Gastrocnemius medialis (tissue), 4 donors: ENCODE measurements at regions of chr2 and their contacts with region 1.

Region 1: DNA sequence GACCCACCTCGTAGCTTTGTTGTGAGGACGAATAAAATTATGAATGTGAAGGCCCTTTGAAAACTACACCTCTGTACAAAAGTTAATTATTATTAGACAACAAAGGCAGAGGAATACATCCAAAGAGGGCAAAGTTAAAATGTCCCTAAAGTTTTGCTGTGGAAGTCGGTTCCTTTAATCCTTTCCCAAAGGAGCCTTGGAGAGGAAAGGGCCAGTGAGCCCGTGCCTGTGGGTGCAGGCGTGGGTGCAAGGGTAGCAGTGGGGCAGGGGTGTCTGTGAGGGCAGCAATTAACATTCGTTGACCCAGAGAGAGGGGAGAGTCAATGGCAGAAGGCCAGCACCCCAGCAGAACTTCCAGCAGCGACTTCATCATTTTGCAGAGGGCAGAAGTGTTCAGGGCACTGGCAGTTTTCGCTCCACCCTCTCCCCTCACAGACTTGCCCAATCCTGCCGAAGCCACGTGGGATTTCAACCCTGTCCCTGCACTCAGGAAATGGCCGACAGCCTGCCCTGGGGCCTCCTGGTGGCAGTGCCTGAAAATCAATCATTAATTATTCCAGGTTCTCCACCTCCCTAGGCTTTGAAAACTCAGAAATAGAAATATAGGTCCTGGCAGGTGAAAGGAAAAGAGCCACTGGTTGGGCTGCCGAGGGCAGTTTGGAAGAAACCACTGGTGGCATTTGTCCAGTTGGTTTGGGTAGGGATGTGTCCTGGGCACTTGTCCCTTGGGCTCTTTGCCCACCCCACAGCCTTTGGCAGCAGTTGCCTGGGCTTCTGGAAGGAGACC is 4.2 kb upstream of the PAX8 start:
- DNase-seq: peak; percentile 31 to 75
- ATAC-seq: peak; percentile 35 to 77
- H3K4me3 ChIP-seq: no peak overlapping the region
- H3K27ac ChIP-seq: peak overlapping the region in 3 of 4 donors; percentile 37 to 66 (median 64)
- H3K4me1 ChIP-seq: peaks cover 4 to 16% of the 10 kb centered on the region in 2 donors
- H3K27me3 ChIP-seq: peaks cover 0 to 8% (median under 1%) of the 10 kb centered on the region in 3 donors
- CTCF ChIP-seq: peak; percentile 15 to 31 (median 24)
- POLR2A ChIP-seq: no peak

Region 2: DNA sequence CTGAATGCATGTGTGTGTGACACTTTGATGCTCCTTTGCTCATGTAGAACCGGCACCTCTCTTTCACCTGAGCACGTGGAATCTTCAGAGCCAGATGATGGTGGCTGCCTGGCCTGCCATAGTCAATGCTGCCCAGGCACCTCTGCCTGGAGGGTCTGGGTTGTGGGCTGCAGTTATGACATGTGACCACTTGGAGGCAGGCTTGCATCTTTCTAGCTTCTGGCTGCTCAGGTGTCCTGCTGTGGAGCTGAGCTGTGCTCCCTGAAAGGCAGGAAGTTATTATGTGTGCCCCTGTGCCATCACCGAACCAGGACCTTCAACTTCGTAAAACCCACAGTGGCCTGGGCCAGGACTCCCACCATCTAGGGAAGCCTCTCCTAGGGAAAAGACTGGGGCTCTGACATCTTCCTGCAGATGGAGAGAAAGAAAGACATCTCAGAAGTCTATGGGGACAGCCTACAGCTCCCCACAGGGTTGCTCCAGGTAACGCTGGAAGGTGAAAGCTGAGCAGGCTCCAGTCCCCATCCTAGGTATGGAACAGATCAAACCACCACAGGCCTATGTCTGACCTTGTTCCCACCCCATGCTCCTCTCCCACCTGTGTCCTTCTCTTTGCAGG is 78.9 kb before region 1 on chr2:
- in situ Hi-C with region 1: no loop called
- intact Hi-C with region 1: loop called (anchors 10 kb)
- DNase-seq: peak; percentile 43 to 62
- ATAC-seq: peak; percentile 82 to 85
- H3K4me3 ChIP-seq: no peak overlapping the region
- H3K27ac ChIP-seq: no peak overlapping the region
- H3K4me1 ChIP-seq: peaks cover 0 to 3% of the 10 kb centered on the region in 2 donors
- H3K27me3 ChIP-seq: no peaks in the 10 kb centered on the region
- CTCF ChIP-seq: peak; percentile 65 to 82 (median 72)
- POLR2A ChIP-seq: no peak